Activated T-helper 1 cell treated with anti-CD3 and anti-CD28 coated beads, Interleukin-12 subunit alpha, Interleukin-12 subunit beta, Interleukin-2, Interleukin-4 antibody, amounts not matched to agents 30 ng/mL and 10 ng/mL and 1 ng/mL, durations not matched to agents 14 hours and 24 hours and 36 hours (primary cell): ENCODE measurements at regions of chr1 and their contacts with region 1.

Region 1: GRCh38 chr1:198157241-198157846 is 546 bp downstream of the NEK7 start:
- DNase-seq: peak; percentile 76
- H3K4me3 Mint-ChIP-seq: peak overlapping the region; percentile 97
- H3K27ac Mint-ChIP-seq: peak overlapping the region; percentile 96
- H3K4me1 Mint-ChIP-seq: peaks cover 47% of the 10 kb centered on the region
- H3K27me3 Mint-ChIP-seq: no peaks in the 10 kb centered on the region

Region 2: DNA sequence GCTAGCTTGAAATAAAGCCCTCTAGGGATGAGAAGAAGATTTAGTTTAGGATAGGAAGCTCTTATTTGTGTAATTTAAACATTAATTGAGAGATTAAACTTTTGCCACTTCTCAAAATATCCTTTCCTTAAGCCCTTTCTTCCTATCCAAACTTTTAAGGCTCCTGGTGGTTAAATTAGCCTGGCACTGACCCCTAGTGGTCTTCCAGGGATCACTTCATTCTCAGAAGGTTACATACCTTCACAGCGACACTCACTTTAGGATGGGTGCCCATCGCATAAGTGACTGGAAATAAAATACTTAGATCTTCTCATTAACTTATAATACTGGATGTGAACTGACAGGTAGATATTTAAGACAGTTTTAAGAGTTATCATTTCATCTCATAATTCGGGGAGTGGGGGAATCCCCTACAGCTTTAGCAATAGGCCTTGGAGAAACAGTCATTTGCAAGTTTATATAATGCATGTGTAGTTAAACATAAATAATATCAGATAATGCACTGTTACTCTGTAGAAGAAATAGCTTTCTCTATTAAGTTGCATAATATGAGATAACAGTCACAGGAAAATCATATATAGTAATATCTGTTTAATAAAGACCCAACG is 232.7 kb before region 1 on chr1:
- intact Hi-C with region 1: loop called (anchors 2 kb)
- DNase-seq: no peak
- H3K4me3 Mint-ChIP-seq: no peak overlapping the region
- H3K27ac Mint-ChIP-seq: no peak overlapping the region
- H3K4me1 Mint-ChIP-seq: peaks cover 22% of the 10 kb centered on the region
- H3K27me3 Mint-ChIP-seq: peaks cover 83% of the 10 kb centered on the region

Region 3: GRCh38 chr1:198175423-198176170 is 18.3 kb after region 1 on chr1:
- intact Hi-C with region 1: loop called (anchors 1 kb)
- DNase-seq: no peak
- H3K4me3 Mint-ChIP-seq: no peak overlapping the region
- H3K27ac Mint-ChIP-seq: peak overlapping the region; percentile 69
- H3K4me1 Mint-ChIP-seq: peaks cover 84% of the 10 kb centered on the region
- H3K27me3 Mint-ChIP-seq: no peaks in the 10 kb centered on the region

Region 4: DNA sequence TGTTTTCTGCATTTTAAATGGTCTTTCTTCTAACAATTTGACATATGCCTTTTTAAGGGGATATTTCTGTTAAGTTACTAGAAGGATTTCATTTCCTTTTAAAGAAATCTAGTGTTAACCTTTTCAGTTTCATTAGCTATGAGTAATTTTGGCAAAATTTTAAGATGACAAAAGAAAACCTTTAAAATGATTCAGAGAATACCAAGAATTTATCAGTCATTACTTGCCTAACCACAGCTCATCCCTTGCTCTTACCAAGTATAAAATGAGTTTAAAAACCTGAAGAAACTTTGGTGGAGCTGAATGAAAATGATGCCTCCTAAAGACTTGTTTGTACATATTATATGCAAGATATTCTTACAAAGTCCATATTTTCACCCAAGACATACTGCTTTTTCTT is 101.1 kb after region 1 on chr1:
- intact Hi-C with region 1: loop called (anchors 1 kb)
- DNase-seq: no peak
- H3K4me3 Mint-ChIP-seq: peak overlapping the region; percentile 11
- H3K27ac Mint-ChIP-seq: peak overlapping the region; percentile 78
- H3K4me1 Mint-ChIP-seq: peaks cover 50% of the 10 kb centered on the region
- H3K27me3 Mint-ChIP-seq: no peaks in the 10 kb centered on the region

Region 5: DNA sequence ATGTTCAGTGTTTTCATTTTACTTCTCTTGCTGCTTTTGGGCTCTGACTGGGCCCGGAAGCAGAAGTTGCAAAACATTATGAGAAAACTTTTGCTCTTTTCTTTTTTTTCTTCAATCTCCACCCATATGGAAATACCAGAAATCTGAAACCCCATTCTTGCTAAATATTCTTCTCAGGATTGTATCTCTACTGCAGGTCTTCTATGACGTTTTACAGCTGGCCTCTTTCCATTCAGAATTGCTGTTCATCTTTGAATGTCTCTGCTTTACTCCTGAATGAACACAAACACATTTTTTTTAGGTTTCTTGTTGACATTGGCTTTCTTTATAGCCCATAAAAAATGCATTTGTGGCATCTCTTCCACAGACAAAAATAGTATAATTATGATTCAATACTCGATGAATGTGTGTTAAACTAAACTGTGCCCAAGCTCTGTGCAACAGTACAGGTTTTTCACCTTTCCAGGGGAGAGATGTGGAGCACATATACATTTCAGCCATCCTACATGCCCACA is 500.3 kb after region 1 on chr1:
- intact Hi-C with region 1: loop called (anchors 5 kb)
- DNase-seq: no peak
- H3K4me3 Mint-ChIP-seq: peak overlapping the region; percentile 63
- H3K27ac Mint-ChIP-seq: peak overlapping the region; percentile 84
- H3K4me1 Mint-ChIP-seq: peaks cover 68% of the 10 kb centered on the region
- H3K27me3 Mint-ChIP-seq: no peaks in the 10 kb centered on the region

Region 6: DNA sequence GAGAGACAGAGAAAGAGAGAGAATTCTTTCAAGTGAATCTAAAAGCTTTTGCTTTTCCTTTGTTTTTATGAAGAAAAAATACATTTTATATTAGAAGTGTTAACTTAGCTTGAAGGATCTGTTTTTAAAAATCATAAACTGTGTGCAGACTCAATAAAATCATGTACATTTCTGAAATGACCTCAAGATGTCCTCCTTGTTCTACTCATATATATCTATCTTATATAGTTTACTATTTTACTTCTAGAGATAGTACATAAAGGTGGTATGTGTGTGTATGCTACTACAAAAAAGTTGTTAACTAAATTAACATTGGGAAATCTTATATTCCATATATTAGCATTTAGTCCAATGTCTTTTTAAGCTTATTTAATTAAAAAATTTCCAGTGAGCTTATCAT is 599.1 kb after region 1 on chr1:
- intact Hi-C with region 1: no loop called
- DNase-seq: no peak
- H3K4me3 Mint-ChIP-seq: no peak overlapping the region
- H3K27ac Mint-ChIP-seq: no peak overlapping the region
- H3K4me1 Mint-ChIP-seq: peaks cover 6% of the 10 kb centered on the region
- H3K27me3 Mint-ChIP-seq: no peaks in the 10 kb centered on the region

Region 7: DNA sequence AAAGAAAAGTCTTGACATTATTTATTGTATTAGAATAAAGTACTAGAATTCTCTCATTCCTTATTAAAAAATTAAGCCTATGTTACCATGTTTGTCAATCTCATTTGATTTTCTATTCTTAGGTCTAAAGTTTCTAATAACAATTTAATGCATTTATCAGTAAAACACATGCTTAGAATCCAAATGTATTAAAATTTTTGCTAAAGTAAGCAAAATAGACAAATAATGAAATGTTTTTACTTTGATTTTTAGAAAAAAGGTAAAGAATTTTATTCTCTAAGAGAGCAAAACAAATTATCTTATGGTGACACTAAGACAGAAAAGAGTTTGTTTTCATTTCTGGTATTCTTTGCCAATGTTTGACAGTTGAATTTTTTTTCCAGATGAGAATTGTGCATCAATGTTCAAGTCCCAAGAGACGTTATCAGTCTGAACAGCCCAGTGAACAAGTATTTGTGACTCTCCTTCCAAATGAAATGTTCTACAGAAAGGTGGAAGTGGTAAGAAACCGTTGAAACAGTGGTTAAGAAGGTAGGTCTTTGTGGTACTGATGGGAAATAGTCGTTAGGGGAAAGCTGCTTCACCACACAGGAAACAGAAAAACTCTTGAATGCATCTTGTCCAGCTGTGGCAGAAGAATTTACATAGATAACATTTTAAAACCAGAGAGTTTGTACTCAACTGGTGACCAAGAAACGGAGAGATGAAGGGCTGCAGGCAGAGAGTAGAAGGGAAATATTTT is 884.0 kb after region 1 on chr1:
- intact Hi-C with region 1: loop called (anchors 10 kb)
- DNase-seq: peak; percentile 66
- H3K4me3 Mint-ChIP-seq: peak overlapping the region; percentile 35
- H3K27ac Mint-ChIP-seq: peak overlapping the region; percentile 83
- H3K4me1 Mint-ChIP-seq: peaks cover 54% of the 10 kb centered on the region
- H3K27me3 Mint-ChIP-seq: no peaks in the 10 kb centered on the region